Sigmoid colon (tissue), 7 donors: ENCODE measurements at regions of chr6 and their contacts with region 1.

Region 1: DNA sequence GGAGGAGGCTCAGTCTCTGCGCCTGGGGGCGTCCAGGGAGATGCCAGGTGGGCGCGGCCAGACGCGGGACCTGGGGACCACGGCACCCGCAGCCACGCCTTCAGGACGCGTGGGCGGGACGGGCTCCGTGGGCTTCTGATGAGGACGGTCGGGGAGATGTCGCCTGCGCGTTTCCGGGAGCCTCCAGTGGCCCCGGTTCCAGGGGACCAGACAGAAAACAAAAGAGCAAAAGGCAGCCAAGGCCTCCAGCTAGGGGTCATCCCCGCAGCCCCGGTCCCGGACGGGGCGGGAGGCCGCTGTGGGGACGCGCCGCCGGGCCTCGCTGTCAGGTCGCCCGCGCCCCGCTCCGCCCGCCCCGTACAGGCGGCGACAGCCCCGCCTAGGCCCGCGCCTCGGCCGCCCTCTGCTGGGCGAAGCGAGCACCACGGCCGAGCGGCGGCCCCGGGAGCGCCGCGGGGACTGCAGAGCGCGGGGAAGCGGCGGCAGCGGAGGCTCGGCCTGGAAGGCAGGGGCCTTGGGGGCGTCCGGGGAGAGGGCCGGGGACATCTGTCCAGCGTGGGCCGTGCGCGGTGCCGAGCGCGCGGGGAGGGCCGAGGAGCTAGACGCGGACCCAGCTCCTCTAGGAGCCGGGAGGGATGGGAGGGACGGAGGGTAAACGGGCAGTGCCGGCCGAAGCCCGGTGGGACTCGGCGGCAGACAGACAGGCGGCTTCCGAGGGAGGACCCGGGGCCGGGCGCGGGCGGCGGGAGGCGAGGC is 48.7 kb downstream of the TMEM242 start:
- DNase-seq: peak; percentile 86
- H3K4me3 ChIP-seq: peak overlapping the region; percentile 40 to 72 (median 62)
- H3K27ac ChIP-seq: peak overlapping the region; percentile 75 to 87 (median 84)
- H3K4me1 ChIP-seq: peaks cover 0 to 19% (median 15%) of the 10 kb centered on the region in 4 donors
- H3K27me3 ChIP-seq: no peaks in the 10 kb centered on the region
- CTCF ChIP-seq: peak in 3 of 4 experiments; percentile 17 to 91 (median 32)
- EP300 ChIP-seq: no peak
- POLR2A ChIP-seq: no peak

Region 2: GRCh38 chr6:155327326-155328073 is 1947.1 kb before region 1 on chr6:
- intact Hi-C with region 1: loop called (anchors 1 kb)
- DNase-seq: peak; percentile 68
- H3K4me3 ChIP-seq: no peak overlapping the region
- H3K27ac ChIP-seq: no peak overlapping the region
- H3K4me1 ChIP-seq: no peaks in the 10 kb centered on the region
- H3K27me3 ChIP-seq: no peaks in the 10 kb centered on the region
- CTCF ChIP-seq: peak; percentile 48 to 86 (median 74)
- EP300 ChIP-seq: no peak
- POLR2A ChIP-seq: no peak

Region 3: GRCh38 chr6:156564127-156564806 is 710.4 kb before region 1 on chr6:
- intact Hi-C with region 1: loop called (anchors 2 kb)
- DNase-seq: peak; percentile 90
- H3K4me3 ChIP-seq: no peak overlapping the region
- H3K27ac ChIP-seq: peak overlapping the region in 2 of 4 donors; percentile 18 to 27
- H3K4me1 ChIP-seq: peaks cover 0 to 15% (median 6%) of the 10 kb centered on the region in 4 donors
- H3K27me3 ChIP-seq: no peaks in the 10 kb centered on the region
- CTCF ChIP-seq: peak; percentile 80 to 93 (median 90)
- EP300 ChIP-seq: no peak
- POLR2A ChIP-seq: no peak

Region 4: GRCh38 chr6:156925718-156926615 is 348.7 kb before region 1 on chr6:
- intact Hi-C with region 1: no loop called
- DNase-seq: no peak
- H3K4me3 ChIP-seq: no peak overlapping the region
- H3K27ac ChIP-seq: no peak overlapping the region
- H3K4me1 ChIP-seq: peaks cover 0 to 26% (median 16%) of the 10 kb centered on the region in 4 donors
- H3K27me3 ChIP-seq: no peaks in the 10 kb centered on the region
- CTCF ChIP-seq: no peak
- EP300 ChIP-seq: no peak
- POLR2A ChIP-seq: no peak

Region 5: GRCh38 chr6:157034436-157035230 is 240.0 kb before region 1 on chr6:
- intact Hi-C with region 1: loop called (anchors 1 kb)
- DNase-seq: no peak
- H3K4me3 ChIP-seq: no peak overlapping the region
- H3K27ac ChIP-seq: peak overlapping the region in 1 of 4 donors; percentile 70
- H3K4me1 ChIP-seq: peaks cover 0 to 47% (median 42%) of the 10 kb centered on the region in 4 donors
- H3K27me3 ChIP-seq: no peaks in the 10 kb centered on the region
- CTCF ChIP-seq: peak in 3 of 4 experiments; percentile 57 to 68 (median 64)
- EP300 ChIP-seq: no peak
- POLR2A ChIP-seq: no peak

Region 6: GRCh38 chr6:157184202-157185020 is 90.2 kb before region 1 on chr6:
- intact Hi-C with region 1: loop called (anchors 2 kb)
- DNase-seq: peak; percentile 83
- H3K4me3 ChIP-seq: peak overlapping the region in 1 of 4 donors; percentile 19
- H3K27ac ChIP-seq: peak overlapping the region in 1 of 4 donors; percentile 1
- H3K4me1 ChIP-seq: peaks cover 0 to 30% (median 29%) of the 10 kb centered on the region in 4 donors
- H3K27me3 ChIP-seq: no peaks in the 10 kb centered on the region
- CTCF ChIP-seq: peak; percentile 78 to 92 (median 84)
- EP300 ChIP-seq: no peak
- POLR2A ChIP-seq: no peak

Region 7: DNA sequence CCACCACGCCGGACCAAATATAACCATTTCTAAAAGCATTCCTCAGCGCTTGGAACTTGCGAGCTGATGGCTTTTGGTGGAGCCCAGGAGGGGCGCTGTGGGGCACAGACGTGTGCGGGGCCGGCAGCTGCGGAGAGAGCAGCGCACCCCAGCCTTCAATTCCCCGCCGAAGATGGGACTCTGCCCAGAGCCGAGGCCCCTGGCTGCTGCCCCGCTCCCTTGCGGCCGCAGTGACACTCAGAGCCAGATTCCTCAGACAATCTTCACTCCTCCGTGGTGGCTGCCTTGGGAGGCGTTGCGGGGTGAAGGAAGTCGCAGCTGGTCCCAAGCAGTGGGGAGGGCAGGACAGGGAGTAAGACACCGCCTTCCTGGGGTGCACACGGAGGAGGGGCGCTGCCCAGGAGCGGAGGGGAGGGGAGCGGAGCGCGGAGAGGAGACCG is 39.0 kb before region 1 on chr6:
- intact Hi-C with region 1: loop called (anchors 2 kb)
- DNase-seq: peak; percentile 82
- H3K4me3 ChIP-seq: peak overlapping the region; percentile 38 to 63 (median 53)
- H3K27ac ChIP-seq: peak overlapping the region; percentile 67 to 84 (median 74)
- H3K4me1 ChIP-seq: peaks cover 0 to 42% (median 37%) of the 10 kb centered on the region in 4 donors
- H3K27me3 ChIP-seq: peaks cover 0 to 4% (median 0%) of the 10 kb centered on the region in 3 donors
- CTCF ChIP-seq: peak; percentile 20 to 68 (median 54)
- EP300 ChIP-seq: no peak
- POLR2A ChIP-seq: no peak